ENCODE measurements at regions of chr4 and their contacts with region 1.

Region 1: GRCh38 chr4:184924516-184924915 is 93.8 kb upstream of the HELT start:
- DNase-seq: no peak
- ATAC-seq: no peak
- H3K4me3 ChIP-seq: no peak overlapping the region
- H3K27ac ChIP-seq: no peak overlapping the region
- H3K4me1 ChIP-seq: no peaks in the 10 kb centered on the region
- H3K27me3 ChIP-seq: no peaks in the 10 kb centered on the region
- CTCF ChIP-seq: no peak
- POLR2A ChIP-seq: no peak
- RAD21 ChIP-seq: no peak

Region 2: DNA sequence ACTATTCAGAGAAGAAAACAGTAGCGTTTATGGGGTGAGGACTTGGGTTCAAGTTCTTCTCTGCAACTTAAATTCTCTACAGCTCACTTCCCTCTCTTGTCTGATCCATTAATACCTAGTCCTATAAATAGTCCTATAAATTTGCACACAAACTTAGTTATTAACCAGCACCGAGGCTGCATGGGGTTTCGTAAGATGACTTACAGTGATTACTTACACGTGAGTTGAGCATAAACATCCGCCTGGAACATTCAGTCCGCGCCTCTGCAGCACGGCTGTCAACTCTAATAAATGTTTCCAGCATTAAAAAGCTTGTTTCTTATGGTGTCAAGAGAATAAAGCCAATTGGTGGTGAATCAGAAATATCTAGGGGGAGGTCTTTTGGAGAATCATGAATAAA is 603.9 kb before region 1 on chr4:
- CTCF ChIA-PET with region 1: no interaction called
- POLR2A ChIA-PET with region 1: no interaction called
- dilution Hi-C with region 1: no loop called
- in situ Hi-C with region 1: no loop called
- intact Hi-C with region 1: loop called (anchors 5 kb)
- DNase-seq: peak; percentile 19
- ATAC-seq: no peak
- H3K4me3 ChIP-seq: no peak overlapping the region
- H3K27ac ChIP-seq: no peak overlapping the region
- H3K4me1 ChIP-seq: no peaks in the 10 kb centered on the region; the same call in 1 of the 2 replicates
- H3K27me3 ChIP-seq: no peaks in the 10 kb centered on the region
- CTCF ChIP-seq: no peak
- POLR2A ChIP-seq: no peak
- RAD21 ChIP-seq: no peak

Region 3: DNA sequence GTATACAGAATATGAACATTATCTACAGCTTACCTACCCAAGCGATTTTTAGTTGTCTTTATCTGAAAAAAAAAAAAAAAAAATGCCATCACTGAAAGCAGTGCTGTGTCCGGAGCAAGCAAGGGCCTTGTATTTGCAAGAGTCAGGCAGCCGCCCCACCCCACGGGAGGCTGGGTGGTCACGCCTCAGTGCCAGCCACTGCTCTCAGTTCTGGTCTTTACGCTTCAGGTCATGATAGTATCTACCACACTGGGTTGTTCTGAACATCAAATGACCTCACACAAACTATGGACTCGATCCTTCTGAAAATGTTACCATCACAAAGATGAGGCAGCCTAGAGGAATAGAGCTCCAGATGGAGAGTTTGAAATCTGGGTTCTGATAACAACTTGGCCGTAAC is 31.1 kb after region 1 on chr4:
- CTCF ChIA-PET with region 1: no interaction called
- POLR2A ChIA-PET with region 1: no interaction called
- dilution Hi-C with region 1: no loop called
- in situ Hi-C with region 1: no loop called
- intact Hi-C with region 1: no loop called
- DNase-seq: no peak
- ATAC-seq: no peak
- H3K4me3 ChIP-seq: no peak overlapping the region
- H3K27ac ChIP-seq: no peak overlapping the region
- H3K4me1 ChIP-seq: no peaks in the 10 kb centered on the region
- H3K27me3 ChIP-seq: no peaks in the 10 kb centered on the region; the same call in 1 of the 2 replicates
- CTCF ChIP-seq: no peak
- POLR2A ChIP-seq: no peak
- RAD21 ChIP-seq: no peak

Measured in IMR-90 (cell line).